ENCODE measurements at regions of chr6 and their contacts with region 1.

Region 1: DNA sequence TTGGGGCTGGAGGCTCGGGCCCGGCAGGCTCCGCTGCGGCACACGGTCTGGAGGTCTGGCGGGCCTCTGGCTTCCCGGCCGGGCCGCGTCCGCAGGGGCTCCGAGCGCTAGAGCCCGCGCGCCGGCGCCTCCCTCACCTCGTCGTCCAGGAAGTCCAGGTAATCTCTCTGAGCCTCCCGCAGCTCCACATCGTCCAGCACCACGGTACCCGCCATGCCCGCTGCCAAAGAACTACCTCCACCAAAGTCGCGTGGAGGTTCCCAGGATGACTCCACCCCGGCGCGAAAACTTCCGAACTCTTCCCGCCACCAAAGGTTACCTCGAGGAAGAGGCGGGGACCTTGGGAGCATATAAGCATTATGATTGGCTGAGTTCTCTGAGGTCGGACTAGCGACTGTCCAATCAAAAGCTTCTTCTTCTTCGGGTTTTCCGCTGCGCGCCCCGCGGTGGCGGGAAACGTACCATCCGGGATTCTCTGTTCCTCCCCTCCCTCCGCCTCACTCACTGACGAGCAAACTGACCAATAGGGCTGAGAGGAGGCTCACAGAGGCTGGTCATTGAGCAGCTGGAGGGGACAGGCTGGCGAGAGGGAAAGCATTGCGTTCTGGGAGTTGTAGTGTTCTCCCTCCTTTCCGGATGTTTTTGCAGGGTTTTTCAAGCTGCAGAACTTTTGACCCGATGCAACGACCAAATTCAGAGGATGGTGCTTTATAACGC is at the start of gene MCM3:
- DNase-seq: peak; percentile 91 to 98
- H3K4me3 ChIP-seq: peak within 1 kb of the TSS; percentile 94 to 98 (median 96)
- H3K27ac ChIP-seq: peak within 1 kb of the TSS; percentile 96
- H3K4me1 ChIP-seq: peaks cover 0 to 5% (median 2%) of the 10 kb centered on the region in 4 experiments; a peak in 4 of 7 replicates
- H3K27me3 ChIP-seq: no peaks in the 10 kb centered on the region
- CTCF ChIP-seq: no peak
- EP300 ChIP-seq: no peak
- POLR2A ChIP-seq: peak; percentile 89 to 98
- RAD21 ChIP-seq: no peak
- total RNA-seq, gene MCM3: 293 TPM in 2 replicates

Region 2: GRCh38 chr6:52263709-52264540 is 20.7 kb before region 1 on chr6:
- CTCF ChIA-PET with region 1: interaction called, 51 read pairs
- POLR2A ChIA-PET with region 1: interaction called, 198 read pairs
- DNase-seq: peak; percentile 21 to 75
- H3K4me3 ChIP-seq: no peak overlapping the region
- H3K27ac ChIP-seq: no peak overlapping the region
- H3K4me1 ChIP-seq: no peaks in the 10 kb centered on the region; a peak in 1 of 7 replicates
- H3K27me3 ChIP-seq: no peaks in the 10 kb centered on the region
- CTCF ChIP-seq: peak; percentile 82 to 94 (median 88)
- EP300 ChIP-seq: no peak
- POLR2A ChIP-seq: no peak
- RAD21 ChIP-seq: peak; percentile 88

Region 3: GRCh38 chr6:52297433-52297832 is 12.8 kb after region 1 on chr6:
- CTCF ChIA-PET with region 1: interaction called, 13 read pairs
- POLR2A ChIA-PET with region 1: interaction called, 12 read pairs
- DNase-seq: no peak
- H3K4me3 ChIP-seq: no peak overlapping the region
- H3K27ac ChIP-seq: no peak overlapping the region
- H3K4me1 ChIP-seq: no peaks in the 10 kb centered on the region
- H3K27me3 ChIP-seq: no peaks in the 10 kb centered on the region
- CTCF ChIP-seq: no peak
- EP300 ChIP-seq: no peak
- POLR2A ChIP-seq: no peak
- RAD21 ChIP-seq: no peak

Region 4: GRCh38 chr6:52335576-52335975 is 51.0 kb after region 1 on chr6:
- CTCF ChIA-PET with region 1: interaction called, 10 read pairs
- POLR2A ChIA-PET with region 1: interaction called, 4 read pairs
- DNase-seq: no peak
- H3K4me3 ChIP-seq: no peak overlapping the region
- H3K27ac ChIP-seq: no peak overlapping the region
- H3K4me1 ChIP-seq: peaks cover 0 to 1% (median 0%) of the 10 kb centered on the region in 4 experiments; a peak in 1 of 7 replicates
- H3K27me3 ChIP-seq: no peaks in the 10 kb centered on the region; a peak in 1 of 7 replicates
- CTCF ChIP-seq: no peak
- EP300 ChIP-seq: no peak
- POLR2A ChIP-seq: no peak
- RAD21 ChIP-seq: no peak

Region 5: GRCh38 chr6:52389626-52390360 is 105.2 kb after region 1 on chr6:
- CTCF ChIA-PET with region 1: interaction called, 20 read pairs
- POLR2A ChIA-PET with region 1: interaction called, 3 read pairs
- DNase-seq: no peak
- H3K4me3 ChIP-seq: no peak overlapping the region
- H3K27ac ChIP-seq: no peak overlapping the region
- H3K4me1 ChIP-seq: no peaks in the 10 kb centered on the region
- H3K27me3 ChIP-seq: peaks cover 0 to 2% (median 0%) of the 10 kb centered on the region in 4 experiments; a peak in 1 of 7 replicates
- CTCF ChIP-seq: no peak
- EP300 ChIP-seq: no peak
- POLR2A ChIP-seq: no peak
- RAD21 ChIP-seq: no peak

Region 6: DNA sequence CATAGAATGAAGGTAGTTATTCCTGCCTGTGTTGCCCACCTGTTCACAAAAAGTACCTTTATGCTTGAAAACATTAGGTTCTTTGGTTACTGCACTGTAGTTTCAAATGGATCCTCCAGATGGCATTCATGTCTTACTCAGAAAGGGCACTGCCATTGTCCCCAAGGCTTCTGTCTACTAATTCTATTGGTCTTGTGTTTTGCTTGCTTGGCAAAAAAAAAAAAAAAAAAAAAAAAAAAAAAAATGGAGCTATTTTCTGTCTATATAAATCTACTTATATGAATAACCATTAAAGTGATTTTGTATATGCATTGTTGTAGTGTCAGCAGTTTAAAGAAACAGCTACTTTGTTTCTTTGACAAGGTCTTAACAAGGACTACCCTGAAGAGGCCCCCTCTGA is 122.8 kb after region 1 on chr6:
- CTCF ChIA-PET with region 1: interaction called, 175 read pairs
- POLR2A ChIA-PET with region 1: interaction called, 75 read pairs
- DNase-seq: no peak
- H3K4me3 ChIP-seq: no peak overlapping the region
- H3K27ac ChIP-seq: no peak overlapping the region
- H3K4me1 ChIP-seq: no peaks in the 10 kb centered on the region
- H3K27me3 ChIP-seq: no peaks in the 10 kb centered on the region
- CTCF ChIP-seq: peak in 2 of 3 experiments; percentile 52 to 53; a peak in 3 of 4 replicates
- EP300 ChIP-seq: no peak
- POLR2A ChIP-seq: no peak
- RAD21 ChIP-seq: peak; percentile 78

Region 7: GRCh38 chr6:52438926-52439325 is 154.3 kb after region 1 on chr6:
- CTCF ChIA-PET with region 1: no interaction called
- POLR2A ChIA-PET with region 1: no interaction called
- DNase-seq: no peak
- H3K4me3 ChIP-seq: no peak overlapping the region
- H3K27ac ChIP-seq: no peak overlapping the region
- H3K4me1 ChIP-seq: no peaks in the 10 kb centered on the region
- H3K27me3 ChIP-seq: no peaks in the 10 kb centered on the region
- CTCF ChIP-seq: no peak
- EP300 ChIP-seq: no peak
- POLR2A ChIP-seq: no peak
- RAD21 ChIP-seq: no peak

Region 8: DNA sequence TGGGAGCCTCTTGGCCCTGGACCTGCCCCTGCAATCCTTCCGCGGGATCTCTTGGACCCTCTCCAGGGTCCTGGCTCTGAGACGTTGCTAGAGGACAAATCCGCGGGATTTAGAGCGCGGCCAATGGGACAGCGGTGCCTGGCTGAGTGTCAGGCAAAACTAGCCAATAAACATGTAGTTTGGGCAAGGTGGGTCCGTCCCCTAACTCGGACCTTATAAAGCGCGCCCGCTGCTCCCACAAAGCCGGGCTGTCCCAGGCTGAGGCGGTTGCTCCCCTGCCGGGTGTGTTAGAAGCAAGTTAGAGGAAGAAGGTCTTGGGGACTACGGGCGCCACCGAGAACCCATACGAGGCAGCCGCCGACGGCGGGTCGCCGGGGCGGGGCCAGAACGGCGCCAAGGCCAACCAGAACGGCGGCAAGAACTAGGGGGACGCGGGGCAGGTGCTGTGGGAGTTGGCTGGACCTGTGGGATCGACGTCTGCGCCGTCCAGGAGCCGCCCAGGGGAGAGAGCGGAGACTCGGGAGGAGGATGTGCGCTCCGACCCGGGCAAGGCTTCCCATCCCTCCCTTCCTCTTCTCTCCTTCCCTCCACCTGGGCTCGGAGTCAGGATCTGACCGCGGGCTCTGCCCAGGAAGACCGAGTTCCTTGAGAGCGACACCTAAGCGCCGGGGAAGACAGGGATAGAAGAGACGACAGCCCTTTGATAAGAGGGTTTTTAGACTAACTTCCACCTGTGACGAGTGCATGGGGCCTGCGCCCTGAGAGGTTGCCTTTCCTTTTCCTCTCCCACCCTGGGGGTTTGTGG is 379.8 kb after region 1 on chr6:
- CTCF ChIA-PET with region 1: interaction called, 21 read pairs
- POLR2A ChIA-PET with region 1: interaction called, 3 read pairs
- DNase-seq: peak; percentile 93
- H3K4me3 ChIP-seq: peak overlapping the region; percentile 66 to 76 (median 74)
- H3K27ac ChIP-seq: no peak overlapping the region
- H3K4me1 ChIP-seq: peaks cover 0 to 10% (median 5%) of the 10 kb centered on the region in 4 experiments; a peak in 3 of 7 replicates
- H3K27me3 ChIP-seq: peaks cover 0 to 10% (median 7%) of the 10 kb centered on the region in 4 experiments; a peak in 5 of 7 replicates
- CTCF ChIP-seq: no peak
- EP300 ChIP-seq: no peak
- POLR2A ChIP-seq: peak; percentile 90 to 95
- RAD21 ChIP-seq: no peak